ENCODE measurements at regions of chr5 and their contacts with region 1.

Region 1: DNA sequence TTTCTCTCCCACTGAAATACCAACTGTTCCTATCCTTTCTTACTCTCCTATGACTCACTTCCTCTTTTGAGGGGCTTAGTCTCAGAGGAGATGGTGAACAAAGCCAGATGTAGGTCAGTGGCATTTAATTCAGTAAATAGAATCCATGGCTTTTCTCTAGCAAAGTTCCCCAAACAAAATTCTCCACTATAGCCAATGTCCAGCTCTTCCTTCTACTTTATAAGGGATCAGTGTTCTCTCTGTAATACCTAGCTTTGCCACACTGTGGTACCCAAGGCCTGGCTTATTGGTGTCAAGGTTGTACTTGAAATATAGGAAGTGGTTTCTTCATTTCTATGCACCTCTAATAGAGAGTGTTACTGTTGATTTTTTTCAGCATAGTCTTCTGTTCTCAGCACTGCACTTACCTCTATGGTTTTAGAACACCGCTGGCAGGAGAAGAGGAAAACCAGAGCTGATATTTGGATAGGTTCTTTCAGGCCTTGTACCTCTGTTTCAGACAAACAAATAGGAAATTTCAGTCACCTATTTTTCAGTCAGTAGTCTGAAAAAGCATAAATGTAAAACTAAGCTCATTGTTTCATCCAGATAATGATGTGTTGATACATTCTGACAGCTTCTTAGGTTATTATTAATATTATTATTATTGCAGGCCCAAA is 40.6 kb upstream of the ITGA2 start:
- DNase-seq: peak; percentile 25 to 81 (median 40)
- ATAC-seq: peak; percentile 100
- H3K4me3 ChIP-seq: no peak overlapping the region
- H3K4me3 Mint-ChIP-seq: no peak overlapping the region
- H3K27ac ChIP-seq: no peak overlapping the region
- H3K27ac Mint-ChIP-seq: no peak overlapping the region
- H3K4me1 ChIP-seq: no peaks in the 10 kb centered on the region
- H3K4me1 Mint-ChIP-seq: peaks cover 10% of the 10 kb centered on the region
- H3K27me3 ChIP-seq: no peaks in the 10 kb centered on the region
- H3K27me3 Mint-ChIP-seq: no peaks in the 10 kb centered on the region
- CTCF ChIP-seq: peak; percentile 75

Region 2: GRCh38 chr5:52560366-52560765 is 388.2 kb before region 1 on chr5:
- CTCF ChIA-PET with region 1: no interaction called
- POLR2A ChIA-PET with region 1: no interaction called
- intact Hi-C with region 1: no loop called
- DNase-seq: peak in 2 of 14 experiments; percentile 1 to 3
- ATAC-seq: no peak
- H3K4me3 ChIP-seq: no peak overlapping the region
- H3K4me3 Mint-ChIP-seq: no peak overlapping the region
- H3K27ac ChIP-seq: no peak overlapping the region
- H3K27ac Mint-ChIP-seq: no peak overlapping the region
- H3K4me1 ChIP-seq: no peaks in the 10 kb centered on the region
- H3K4me1 Mint-ChIP-seq: no peaks in the 10 kb centered on the region
- H3K27me3 ChIP-seq: no peaks in the 10 kb centered on the region
- H3K27me3 Mint-ChIP-seq: peaks cover 4% of the 10 kb centered on the region
- CTCF ChIP-seq: no peak

Region 3: DNA sequence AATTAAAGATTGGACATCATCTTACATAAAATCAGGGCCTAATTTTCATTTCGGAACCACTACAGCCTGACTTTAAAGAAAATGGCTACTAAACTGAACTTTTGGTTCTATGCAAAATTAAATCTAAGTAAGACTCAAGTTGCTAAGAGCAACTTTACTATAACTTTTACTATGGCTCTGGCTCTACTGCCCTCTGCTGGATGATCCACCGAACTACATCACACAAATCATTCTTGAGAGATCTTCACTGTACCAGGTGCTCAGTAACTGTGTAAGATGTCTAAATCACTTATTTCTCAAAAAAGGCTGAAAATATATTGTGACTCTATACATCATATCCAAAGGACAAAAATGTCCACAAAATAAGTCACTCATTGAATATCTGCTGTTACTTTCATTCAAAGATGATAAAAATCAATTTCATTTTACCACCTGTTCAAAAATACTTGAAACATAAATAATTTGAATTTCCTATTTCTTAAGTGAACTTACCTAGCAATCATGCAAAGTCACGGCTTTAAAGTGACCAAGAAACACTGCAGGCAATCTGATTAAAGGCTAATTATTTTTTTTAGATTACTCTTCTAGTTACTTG is 147.5 kb after region 1 on chr5:
- CTCF ChIA-PET with region 1: interaction called, 35 read pairs
- POLR2A ChIA-PET with region 1: interaction called, 3 read pairs
- intact Hi-C with region 1: loop called (anchors 1 kb)
- DNase-seq: peak; percentile 41 to 82 (median 63)
- ATAC-seq: peak; percentile 97
- H3K4me3 ChIP-seq: no peak overlapping the region
- H3K4me3 Mint-ChIP-seq: no peak overlapping the region
- H3K27ac ChIP-seq: no peak overlapping the region
- H3K27ac Mint-ChIP-seq: peak overlapping the region; percentile 10
- H3K4me1 ChIP-seq: no peaks in the 10 kb centered on the region
- H3K4me1 Mint-ChIP-seq: peaks cover 4% of the 10 kb centered on the region
- H3K27me3 ChIP-seq: no peaks in the 10 kb centered on the region
- H3K27me3 Mint-ChIP-seq: no peaks in the 10 kb centered on the region
- CTCF ChIP-seq: peak; percentile 92

Region 4: GRCh38 chr5:53874409-53874808 is 925.9 kb after region 1 on chr5:
- CTCF ChIA-PET with region 1: no interaction called
- POLR2A ChIA-PET with region 1: no interaction called
- intact Hi-C with region 1: no loop called
- DNase-seq: no peak
- ATAC-seq: no peak
- H3K4me3 ChIP-seq: no peak overlapping the region
- H3K4me3 Mint-ChIP-seq: no peak overlapping the region
- H3K27ac ChIP-seq: no peak overlapping the region
- H3K27ac Mint-ChIP-seq: no peak overlapping the region
- H3K4me1 ChIP-seq: no peaks in the 10 kb centered on the region
- H3K4me1 Mint-ChIP-seq: no peaks in the 10 kb centered on the region
- H3K27me3 ChIP-seq: no peaks in the 10 kb centered on the region
- H3K27me3 Mint-ChIP-seq: no peaks in the 10 kb centered on the region
- CTCF ChIP-seq: no peak

Region 5: DNA sequence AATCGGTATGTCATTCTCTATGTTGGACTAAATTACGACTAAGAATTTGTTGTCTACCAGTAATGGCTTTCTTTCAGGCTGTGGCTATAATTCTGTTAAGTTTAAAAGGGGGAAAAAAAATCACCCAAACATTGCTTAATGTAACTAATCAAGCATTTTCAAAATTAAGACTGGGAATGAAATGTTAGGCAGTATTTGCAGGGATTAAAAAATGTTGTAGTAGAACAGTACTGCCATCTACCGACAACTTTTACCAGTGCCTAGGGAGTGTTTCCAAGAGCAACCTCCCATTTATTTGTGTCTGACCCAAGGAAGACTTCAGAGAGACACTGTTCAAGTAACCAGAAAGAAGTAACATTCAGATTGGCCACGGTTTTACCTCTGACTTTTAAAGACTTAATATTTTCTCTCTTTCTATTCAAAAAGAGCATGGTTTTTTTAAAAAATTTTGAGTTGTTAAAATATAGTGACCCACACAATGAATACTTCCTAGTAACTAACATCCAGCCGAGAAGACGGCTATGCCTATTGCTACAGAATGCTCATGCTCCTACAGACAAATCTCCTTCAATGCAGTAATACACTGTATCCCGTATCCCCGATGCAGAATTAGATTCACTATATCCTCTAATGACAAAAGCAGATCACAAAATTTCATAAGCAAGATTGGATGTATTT is 1269.4 kb after region 1 on chr5:
- CTCF ChIA-PET with region 1: no interaction called
- POLR2A ChIA-PET with region 1: no interaction called
- intact Hi-C with region 1: loop called in 1 of 2 experiments (anchors 5 kb)
- DNase-seq: peak in 4 of 14 experiments; percentile 10 to 55 (median 50)
- ATAC-seq: no peak
- H3K4me3 ChIP-seq: no peak overlapping the region
- H3K4me3 Mint-ChIP-seq: no peak overlapping the region
- H3K27ac ChIP-seq: no peak overlapping the region
- H3K27ac Mint-ChIP-seq: no peak overlapping the region
- H3K4me1 ChIP-seq: no peaks in the 10 kb centered on the region
- H3K4me1 Mint-ChIP-seq: peaks cover 16% of the 10 kb centered on the region
- H3K27me3 ChIP-seq: no peaks in the 10 kb centered on the region
- H3K27me3 Mint-ChIP-seq: no peaks in the 10 kb centered on the region
- CTCF ChIP-seq: peak; percentile 69

Region 6: DNA sequence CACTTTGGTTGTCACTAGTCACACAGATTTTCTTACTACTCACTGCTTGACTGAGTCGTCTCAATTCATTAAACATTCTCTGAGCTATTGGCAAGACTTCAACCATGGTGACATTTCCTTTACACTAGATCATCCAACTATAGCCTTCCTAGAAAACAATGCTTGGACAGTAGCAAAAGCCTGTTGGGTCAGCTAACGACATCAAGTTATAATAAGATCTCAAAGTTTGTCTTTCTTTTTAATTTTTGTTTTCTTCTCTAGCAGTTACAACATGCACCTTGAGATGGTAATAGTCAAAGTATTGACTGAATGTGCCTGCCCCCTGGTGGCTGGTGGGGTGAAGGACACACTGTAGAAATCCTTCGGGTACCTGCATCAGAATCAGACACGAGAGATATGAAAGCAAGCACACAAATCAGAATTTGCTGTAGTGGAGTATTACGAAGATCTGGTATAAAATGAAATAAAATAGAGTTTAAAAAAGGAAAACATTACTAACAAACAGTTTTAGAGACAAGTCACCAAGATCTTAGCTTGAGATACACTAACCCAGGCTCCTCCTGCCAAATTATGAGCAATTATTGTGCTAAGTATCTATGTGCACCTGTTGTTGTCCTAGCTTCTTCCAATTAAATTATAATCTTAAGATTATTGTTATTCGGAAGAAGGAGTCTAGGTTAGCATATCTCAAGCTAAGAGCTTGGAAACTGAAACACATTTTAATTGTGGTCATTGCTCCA is 1280.7 kb after region 1 on chr5:
- CTCF ChIA-PET with region 1: interaction called, 6 read pairs
- POLR2A ChIA-PET with region 1: no interaction called
- intact Hi-C with region 1: loop called (anchors 5 kb)
- DNase-seq: peak; percentile 49 to 77 (median 63)
- ATAC-seq: peak; percentile 85
- H3K4me3 ChIP-seq: no peak overlapping the region
- H3K4me3 Mint-ChIP-seq: no peak overlapping the region
- H3K27ac ChIP-seq: no peak overlapping the region
- H3K27ac Mint-ChIP-seq: no peak overlapping the region
- H3K4me1 ChIP-seq: no peaks in the 10 kb centered on the region
- H3K4me1 Mint-ChIP-seq: peaks cover 9% of the 10 kb centered on the region
- H3K27me3 ChIP-seq: no peaks in the 10 kb centered on the region
- H3K27me3 Mint-ChIP-seq: no peaks in the 10 kb centered on the region
- CTCF ChIP-seq: peak; percentile 97

Region 7: DNA sequence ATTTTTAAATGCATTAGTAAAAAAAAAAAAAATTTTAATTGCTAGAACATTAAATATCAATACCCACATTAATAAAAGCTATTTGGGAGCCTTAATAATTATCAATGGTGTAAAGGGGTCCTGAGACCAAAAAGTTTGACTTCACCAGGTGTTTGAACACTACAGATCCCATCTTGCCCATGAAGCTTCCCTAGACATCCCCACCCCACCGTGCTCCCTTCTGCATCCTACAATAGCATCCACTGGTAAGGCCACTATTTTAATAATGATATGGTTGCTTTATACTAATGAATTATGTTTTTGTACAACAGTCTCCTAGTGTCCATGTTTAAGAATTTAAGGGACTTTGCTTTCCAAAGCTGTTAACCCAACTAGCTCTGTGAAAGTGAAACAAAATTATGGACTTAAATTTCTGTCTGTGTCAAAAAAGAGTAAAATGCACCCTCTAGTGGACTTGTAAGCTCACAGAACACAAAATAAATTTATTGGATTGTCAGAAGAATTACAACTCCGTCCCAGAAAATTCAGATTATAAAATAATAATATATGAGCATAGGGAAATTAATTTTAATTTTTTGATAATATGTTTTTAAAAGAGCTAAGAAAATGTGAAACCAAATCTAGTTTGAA is 1285.9 kb after region 1 on chr5:
- CTCF ChIA-PET with region 1: interaction called, 6 read pairs
- POLR2A ChIA-PET with region 1: no interaction called
- intact Hi-C with region 1: loop called (anchors 5 kb)
- DNase-seq: peak in 1 of 14 experiments; percentile 26
- ATAC-seq: no peak
- H3K4me3 ChIP-seq: no peak overlapping the region
- H3K4me3 Mint-ChIP-seq: no peak overlapping the region
- H3K27ac ChIP-seq: no peak overlapping the region
- H3K27ac Mint-ChIP-seq: no peak overlapping the region
- H3K4me1 ChIP-seq: no peaks in the 10 kb centered on the region
- H3K4me1 Mint-ChIP-seq: peaks cover 5% of the 10 kb centered on the region
- H3K27me3 ChIP-seq: no peaks in the 10 kb centered on the region
- H3K27me3 Mint-ChIP-seq: no peaks in the 10 kb centered on the region
- CTCF ChIP-seq: peak; percentile 36

Measured in CD4-positive, alpha-beta T cell (primary cell).